CD4-positive, alpha-beta T cell (primary cell): ENCODE measurements at regions of chr10 and their contacts with region 1.

Region 1: GRCh38 chr10:116385994-116386809 is 41.4 kb upstream of the PNLIPRP3 start:
- DNase-seq: peak in 3 of 14 experiments; percentile 2 to 15 (median 10)
- ATAC-seq: no peak
- H3K4me3 ChIP-seq: no peak overlapping the region
- H3K4me3 Mint-ChIP-seq: no peak overlapping the region
- H3K27ac ChIP-seq: no peak overlapping the region
- H3K27ac Mint-ChIP-seq: no peak overlapping the region
- H3K4me1 ChIP-seq: no peaks in the 10 kb centered on the region
- H3K4me1 Mint-ChIP-seq: no peaks in the 10 kb centered on the region
- H3K27me3 ChIP-seq: no peaks in the 10 kb centered on the region
- H3K27me3 Mint-ChIP-seq: peaks cover 7% of the 10 kb centered on the region
- CTCF ChIP-seq: peak; percentile 65

Region 2: DNA sequence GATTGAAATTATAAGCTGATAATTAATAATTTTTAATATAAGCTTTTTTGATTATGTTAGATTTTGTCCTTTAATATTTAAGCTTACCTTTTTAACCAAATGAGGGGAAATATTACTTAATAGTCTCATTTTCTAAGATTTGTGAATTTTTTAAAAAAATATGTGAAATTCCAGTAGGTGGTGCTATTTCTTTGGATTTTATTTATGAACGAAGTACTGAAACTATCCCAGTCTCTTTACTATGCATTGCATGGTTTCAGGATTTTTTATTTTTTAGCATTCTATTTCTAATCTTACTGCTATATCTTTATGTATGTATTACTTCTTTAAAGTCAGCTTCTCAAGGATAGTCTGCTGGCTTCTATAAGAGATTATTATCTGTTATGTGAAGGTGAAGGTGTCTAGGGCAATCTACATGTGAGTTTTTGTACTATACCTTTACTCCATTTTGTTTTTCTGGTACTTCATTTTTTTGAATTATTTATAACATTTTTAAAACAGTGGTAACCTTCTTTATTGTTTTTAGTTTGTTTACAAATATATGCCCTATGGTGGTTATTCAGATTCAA is 1214.7 kb before region 1 on chr10:
- CTCF ChIA-PET with region 1: no interaction called
- POLR2A ChIA-PET with region 1: no interaction called
- intact Hi-C with region 1: loop called (anchors 2 to 5 kb)
- DNase-seq: no peak
- ATAC-seq: no peak
- H3K4me3 ChIP-seq: no peak overlapping the region
- H3K4me3 Mint-ChIP-seq: no peak overlapping the region
- H3K27ac ChIP-seq: no peak overlapping the region
- H3K27ac Mint-ChIP-seq: no peak overlapping the region
- H3K4me1 ChIP-seq: no peaks in the 10 kb centered on the region
- H3K4me1 Mint-ChIP-seq: no peaks in the 10 kb centered on the region
- H3K27me3 ChIP-seq: peaks cover 0 to 3% of the 10 kb centered on the region in 2 experiments
- H3K27me3 Mint-ChIP-seq: peaks cover 4% of the 10 kb centered on the region
- CTCF ChIP-seq: no peak

Region 3: DNA sequence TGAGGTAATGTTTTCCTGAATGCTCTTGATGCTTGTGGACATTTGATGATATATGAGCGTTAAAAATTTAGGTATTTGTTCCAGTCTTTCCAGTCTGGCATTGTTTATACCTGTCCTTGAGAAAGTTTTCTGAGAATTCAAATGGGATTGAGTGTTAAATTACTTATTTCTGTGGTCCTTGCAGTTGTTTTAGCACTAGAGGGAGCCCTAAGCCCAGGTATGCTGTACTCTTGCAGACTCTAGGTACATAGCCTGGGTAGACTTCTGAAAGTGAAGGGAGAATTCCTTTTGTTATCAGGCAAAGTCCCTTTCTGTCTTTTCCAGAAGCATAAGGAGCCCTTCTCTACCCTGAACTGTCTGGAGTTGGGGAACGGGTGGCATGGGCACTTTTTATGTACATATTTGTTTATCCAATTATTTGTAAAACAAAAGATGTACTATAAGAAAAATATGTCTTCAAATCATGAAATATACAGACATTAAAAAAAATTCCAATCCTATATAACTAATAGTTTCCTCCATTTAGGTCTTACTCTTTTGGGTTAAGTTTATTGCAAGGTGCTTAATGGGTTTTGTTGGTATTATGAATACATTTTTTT is 1030.9 kb before region 1 on chr10:
- CTCF ChIA-PET with region 1: no interaction called
- POLR2A ChIA-PET with region 1: no interaction called
- intact Hi-C with region 1: loop called in 1 of 2 experiments (anchors 5 kb)
- DNase-seq: peak in 3 of 14 experiments; percentile 3 to 20 (median 8)
- ATAC-seq: no peak
- H3K4me3 ChIP-seq: no peak overlapping the region
- H3K4me3 Mint-ChIP-seq: no peak overlapping the region
- H3K27ac ChIP-seq: no peak overlapping the region
- H3K27ac Mint-ChIP-seq: no peak overlapping the region
- H3K4me1 ChIP-seq: no peaks in the 10 kb centered on the region
- H3K4me1 Mint-ChIP-seq: no peaks in the 10 kb centered on the region
- H3K27me3 ChIP-seq: no peaks in the 10 kb centered on the region
- H3K27me3 Mint-ChIP-seq: no peaks in the 10 kb centered on the region
- CTCF ChIP-seq: no peak

Region 4: GRCh38 chr10:115706026-115706781 is 680.0 kb before region 1 on chr10:
- CTCF ChIA-PET with region 1: no interaction called
- POLR2A ChIA-PET with region 1: no interaction called
- intact Hi-C with region 1: loop called in 1 of 2 experiments (anchors 5 kb)
- DNase-seq: peak in 1 of 14 experiments; percentile 2
- ATAC-seq: no peak
- H3K4me3 ChIP-seq: no peak overlapping the region
- H3K4me3 Mint-ChIP-seq: no peak overlapping the region
- H3K27ac ChIP-seq: no peak overlapping the region
- H3K27ac Mint-ChIP-seq: no peak overlapping the region
- H3K4me1 ChIP-seq: no peaks in the 10 kb centered on the region
- H3K4me1 Mint-ChIP-seq: no peaks in the 10 kb centered on the region
- H3K27me3 ChIP-seq: no peaks in the 10 kb centered on the region
- H3K27me3 Mint-ChIP-seq: no peaks in the 10 kb centered on the region
- CTCF ChIP-seq: no peak